ENCODE measurements at regions of chrX and their contacts with region 1.

Region 1: DNA sequence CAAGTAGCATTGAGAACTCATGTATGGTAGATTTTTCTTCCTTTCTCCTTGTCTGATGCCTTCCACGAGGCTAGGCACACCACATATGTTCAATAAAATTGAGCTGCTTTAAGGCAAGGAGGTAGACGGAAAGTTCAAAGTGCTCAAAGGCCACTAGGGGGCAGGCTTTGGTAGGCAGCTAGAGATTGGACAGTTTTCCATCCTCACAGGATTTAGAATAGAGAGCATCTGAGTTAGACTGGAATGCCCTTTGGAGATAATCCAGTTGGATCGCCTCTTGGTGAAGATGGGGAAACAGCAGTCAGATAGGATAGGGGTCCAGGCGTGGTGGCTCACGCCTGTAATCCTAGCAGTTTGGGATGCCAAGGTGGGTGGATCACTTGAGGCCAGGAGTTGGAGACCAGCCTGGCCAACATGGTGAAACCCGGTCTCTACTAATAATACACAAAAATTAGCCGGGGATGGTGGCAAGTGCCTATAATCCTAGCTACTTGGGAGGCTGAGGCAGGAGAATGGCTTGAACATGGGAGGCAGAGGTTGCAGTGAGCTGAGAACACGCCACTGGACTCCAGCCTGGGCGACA is 30.4 kb downstream of the ELF4 start:
- DNase-seq: no peak
- ATAC-seq: no peak
- H3K4me3 Mint-ChIP-seq: peak overlapping the region; percentile 13
- H3K27ac Mint-ChIP-seq: peak overlapping the region; percentile 16
- H3K4me1 Mint-ChIP-seq: peaks cover 29% of the 10 kb centered on the region
- H3K27me3 Mint-ChIP-seq: no peaks in the 10 kb centered on the region

Region 2: DNA sequence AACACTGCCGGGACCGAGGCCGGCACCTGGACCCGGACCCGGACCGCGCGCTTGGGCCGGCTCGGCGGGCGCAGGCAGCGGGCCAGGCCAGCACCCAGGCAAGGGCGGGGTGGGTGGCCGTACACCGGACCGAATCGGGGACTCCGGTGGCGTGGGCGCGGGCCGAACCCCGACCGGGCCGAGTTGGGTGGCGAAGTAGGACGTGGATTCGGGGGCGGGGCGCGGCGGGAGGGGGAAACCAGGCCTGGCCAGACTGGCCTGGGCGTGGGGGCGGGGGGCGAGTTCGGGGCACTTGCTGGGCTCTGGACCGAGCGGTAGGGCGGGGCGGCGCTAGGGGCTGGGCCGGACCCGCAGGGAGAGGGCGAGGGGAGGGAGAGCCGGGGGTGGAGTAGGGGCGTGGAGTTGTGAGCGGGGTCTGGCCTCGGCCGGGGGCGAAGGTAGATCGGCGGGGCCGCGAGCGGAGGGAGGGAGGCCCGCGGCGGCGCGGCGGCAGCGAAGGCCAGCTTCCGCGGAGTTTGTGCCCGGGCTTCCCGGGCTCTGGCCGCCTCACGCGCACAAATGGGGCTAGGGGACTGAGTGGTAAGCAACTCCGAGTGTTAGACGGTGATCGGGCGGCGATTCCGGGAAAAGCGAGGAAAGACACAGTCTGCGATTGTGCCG is 99.2 kb before region 1 on chrX:
- POLR2A ChIA-PET with region 1: no interaction called
- DNase-seq: peak; percentile 49
- ATAC-seq: no peak
- H3K4me3 Mint-ChIP-seq: no peak overlapping the region
- H3K27ac Mint-ChIP-seq: no peak overlapping the region
- H3K4me1 Mint-ChIP-seq: peaks cover 20% of the 10 kb centered on the region
- H3K27me3 Mint-ChIP-seq: no peaks in the 10 kb centered on the region

Region 3: DNA sequence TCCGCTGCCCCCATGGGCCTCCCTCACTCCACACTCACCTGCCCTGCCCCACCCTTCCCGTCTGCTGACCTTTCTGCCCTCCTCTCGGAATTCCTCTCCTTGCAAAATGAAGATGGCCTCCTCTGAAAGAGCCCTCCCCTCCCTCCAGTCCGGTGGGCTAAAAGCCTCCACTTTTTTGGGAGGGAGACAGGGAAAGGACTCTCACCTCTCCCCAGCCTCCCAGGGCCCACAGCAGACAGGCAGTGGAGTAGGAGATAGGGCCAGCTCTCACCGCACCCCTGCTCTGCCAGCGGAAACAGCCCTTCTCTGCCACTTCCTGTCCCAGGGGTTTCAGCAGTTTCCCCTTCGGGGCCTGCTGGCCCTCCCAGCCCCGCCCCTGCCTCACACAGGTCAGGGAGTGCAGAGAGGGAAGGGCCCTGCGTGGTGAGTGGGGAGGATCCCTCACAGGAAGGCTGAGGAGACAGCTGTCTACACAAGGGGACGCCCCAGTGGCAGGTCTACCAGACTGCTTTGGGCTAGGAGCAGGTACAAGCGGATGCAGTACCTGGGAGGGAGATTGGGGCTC is 12.1 kb after region 1 on chrX:
- POLR2A ChIA-PET with region 1: interaction called, 11 read pairs
- DNase-seq: peak; percentile 78
- ATAC-seq: peak; percentile 98
- H3K4me3 Mint-ChIP-seq: peak overlapping the region; percentile 93
- H3K27ac Mint-ChIP-seq: peak overlapping the region; percentile 95
- H3K4me1 Mint-ChIP-seq: peaks cover 35% of the 10 kb centered on the region
- H3K27me3 Mint-ChIP-seq: no peaks in the 10 kb centered on the region

Region 4: DNA sequence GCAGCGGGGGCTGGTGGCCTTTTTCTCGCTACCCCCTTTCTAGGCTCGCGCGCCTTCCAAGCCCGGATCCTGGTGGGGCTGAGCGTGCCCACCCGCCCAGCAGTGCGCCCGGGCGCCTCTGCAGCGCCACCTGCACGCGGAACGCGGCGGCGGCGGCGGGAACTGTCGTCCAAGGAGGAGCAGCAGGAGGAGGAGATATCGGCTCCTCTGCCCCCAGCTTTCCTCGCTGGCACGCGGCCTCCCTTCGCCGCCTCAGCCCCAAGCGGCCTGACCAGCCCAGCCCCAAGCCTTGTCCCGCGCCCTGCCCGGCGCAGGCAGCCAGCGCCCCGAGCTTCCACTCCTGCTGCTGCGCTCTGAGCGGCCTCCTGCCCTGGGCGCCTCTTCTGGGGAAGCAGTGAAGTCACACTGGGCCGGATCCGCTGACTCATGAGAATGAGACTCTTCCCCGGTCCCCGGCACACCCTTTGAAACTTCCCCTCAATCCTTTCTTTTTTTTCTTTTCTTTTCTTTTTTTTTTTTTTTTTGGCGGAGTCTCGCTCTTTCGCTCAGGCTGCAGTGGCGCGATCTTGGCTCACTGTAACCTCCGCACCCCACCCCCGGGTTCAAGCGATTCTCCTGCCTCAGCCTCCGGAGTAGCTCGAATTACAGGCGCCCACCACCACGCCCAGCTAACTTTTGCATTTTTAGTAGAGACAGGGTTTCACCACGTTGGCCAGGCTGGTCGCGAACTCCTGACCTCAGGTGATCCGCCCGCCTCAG is 41.0 kb after region 1 on chrX:
- POLR2A ChIA-PET with region 1: interaction called, 27 read pairs
- DNase-seq: peak; percentile 82
- ATAC-seq: peak; percentile 91
- H3K4me3 Mint-ChIP-seq: peak overlapping the region; percentile 68
- H3K27ac Mint-ChIP-seq: peak overlapping the region; percentile 61
- H3K4me1 Mint-ChIP-seq: peaks cover 12% of the 10 kb centered on the region
- H3K27me3 Mint-ChIP-seq: no peaks in the 10 kb centered on the region

Region 5: GRCh38 chrX:130170752-130171445 is 91.0 kb after region 1 on chrX:
- POLR2A ChIA-PET with region 1: interaction called, 40 read pairs
- DNase-seq: peak; percentile 74
- ATAC-seq: peak; percentile 89
- H3K4me3 Mint-ChIP-seq: peak overlapping the region; percentile 94
- H3K27ac Mint-ChIP-seq: peak overlapping the region; percentile 89
- H3K4me1 Mint-ChIP-seq: peaks cover 19% of the 10 kb centered on the region
- H3K27me3 Mint-ChIP-seq: no peaks in the 10 kb centered on the region

Measured in activated naive CD8-positive, alpha-beta T cell treated with anti-CD3 and anti-CD28 coated beads, Interleukin-2, amount 10 ng/mL, durations not matched to agents 7 days and 5 days (primary cell).